ENCODE measurements at regions of chr2 and their contacts with region 1.

Region 1: DNA sequence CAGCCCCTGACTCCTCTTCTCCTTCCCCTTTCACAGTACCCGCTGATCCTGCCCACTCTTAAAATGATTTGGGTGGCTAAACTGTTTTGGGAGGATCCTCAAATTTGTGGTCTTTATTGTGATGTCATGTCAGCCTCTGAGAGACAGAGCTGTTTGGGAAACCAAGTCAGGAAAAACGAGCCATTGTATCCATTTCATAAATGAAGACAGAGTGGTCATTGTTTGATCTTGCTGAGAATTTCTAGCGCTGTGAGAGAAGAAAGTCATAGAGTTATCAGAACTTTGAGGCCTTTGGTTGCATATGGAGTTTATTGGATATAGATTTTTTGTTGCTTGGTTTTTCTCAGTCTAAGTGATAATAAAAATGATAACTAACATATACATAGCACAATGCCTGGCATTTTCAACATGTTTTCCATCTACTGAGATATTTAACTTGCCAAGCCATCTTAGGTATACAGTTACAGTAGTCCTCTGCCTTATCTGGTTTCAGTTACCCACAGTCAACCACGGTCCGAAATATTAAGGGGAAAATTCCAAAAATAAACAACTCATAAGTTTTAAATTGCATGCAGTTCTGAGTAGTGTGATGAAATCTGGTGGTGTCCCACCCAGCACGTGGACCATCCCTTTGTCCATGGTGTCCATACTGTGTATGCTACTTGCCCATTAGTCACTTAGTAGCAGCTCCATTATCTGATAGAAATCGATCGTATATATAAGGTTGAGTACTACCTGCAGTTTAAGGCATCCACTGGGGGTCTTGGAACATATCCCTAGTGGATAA is 105.0 kb upstream of the RASGRP3 start:
- DNase-seq: no peak
- ATAC-seq: no peak
- H3K4me3 Mint-ChIP-seq: no peak overlapping the region
- H3K27ac Mint-ChIP-seq: no peak overlapping the region
- H3K4me1 Mint-ChIP-seq: peaks cover 11% of the 10 kb centered on the region
- H3K27me3 Mint-ChIP-seq: no peaks in the 10 kb centered on the region
- CTCF ChIP-seq: no peak

Region 2: DNA sequence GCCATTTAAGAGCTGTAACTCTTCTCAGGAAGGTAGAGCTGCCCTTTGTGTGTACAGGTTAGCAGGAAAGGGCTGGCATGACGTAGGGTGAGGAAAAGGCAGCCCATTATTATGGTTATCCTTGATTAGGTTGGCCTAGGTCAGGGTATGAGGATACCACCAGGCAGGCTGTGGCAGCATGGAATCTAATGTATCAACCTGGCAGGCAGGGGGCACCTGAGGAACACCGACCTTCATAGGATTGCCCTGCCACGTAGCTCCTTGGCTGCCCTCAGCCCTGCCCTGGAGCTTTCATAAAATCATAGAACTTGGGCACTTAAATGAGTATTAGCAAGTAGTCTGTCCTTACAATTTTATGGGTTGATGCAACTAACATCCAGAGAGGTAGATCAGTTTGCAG is 163.1 kb before region 1 on chr2:
- CTCF ChIA-PET with region 1: interaction called, 10 read pairs
- POLR2A ChIA-PET with region 1: no interaction called
- DNase-seq: no peak
- ATAC-seq: peak; percentile 72
- H3K4me3 Mint-ChIP-seq: no peak overlapping the region
- H3K27ac Mint-ChIP-seq: no peak overlapping the region
- H3K4me1 Mint-ChIP-seq: peaks cover 11% of the 10 kb centered on the region
- H3K27me3 Mint-ChIP-seq: no peaks in the 10 kb centered on the region
- CTCF ChIP-seq: no peak

Measured in WTC11 (cell line).